WTC11 (cell line): ENCODE measurements at regions of chr5 and their contacts with region 1.

Region 1: DNA sequence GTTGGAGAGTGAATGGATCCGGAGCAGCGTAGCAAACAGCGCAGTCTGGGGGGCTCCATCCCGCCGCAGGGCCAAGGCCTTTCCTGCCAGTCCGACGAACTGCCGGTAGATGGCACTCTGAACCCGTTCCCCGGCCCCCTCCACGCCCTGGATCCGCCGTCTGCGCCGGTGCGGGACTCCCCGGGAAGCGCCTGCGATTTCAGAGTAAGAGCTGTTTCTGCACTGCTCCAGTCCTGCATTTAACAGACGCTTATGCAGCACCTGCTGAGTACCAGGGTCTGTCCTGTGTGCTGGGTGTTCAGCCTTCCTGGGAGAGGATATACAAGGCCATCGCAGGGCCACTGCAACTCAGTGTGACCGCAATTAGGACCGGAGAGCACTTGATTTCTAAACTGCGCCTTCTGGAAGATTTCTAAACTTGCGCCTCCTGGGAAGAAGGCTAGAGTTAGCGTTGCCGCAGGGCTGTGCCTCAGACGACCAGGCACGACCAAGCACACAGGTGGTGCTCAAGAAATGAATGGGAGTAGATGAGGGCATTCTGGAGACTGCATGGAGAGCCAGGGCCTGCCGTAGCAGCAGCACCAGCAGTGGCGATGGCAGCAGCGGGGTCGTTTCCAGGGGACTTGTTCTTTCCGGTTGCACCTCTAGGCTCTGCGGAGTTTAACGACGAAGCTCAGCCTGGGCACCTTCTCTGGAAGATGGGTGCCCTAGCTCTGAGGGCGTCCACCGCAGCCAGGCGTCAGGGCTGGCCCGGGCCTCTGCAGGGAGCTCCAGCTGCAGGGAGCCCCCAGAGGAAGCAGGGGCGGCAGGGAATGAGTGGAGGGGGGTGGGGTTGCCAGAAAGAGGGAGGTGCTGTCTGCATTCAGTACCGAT is 14.3 kb upstream of the TIFAB start:
- DNase-seq: peak; percentile 91
- ATAC-seq: peak; percentile 83
- H3K4me3 Mint-ChIP-seq: peak overlapping the region; percentile 77
- H3K27ac Mint-ChIP-seq: no peak overlapping the region
- H3K4me1 Mint-ChIP-seq: peaks cover 23% of the 10 kb centered on the region
- H3K27me3 Mint-ChIP-seq: peaks cover 91% of the 10 kb centered on the region
- CTCF ChIP-seq: peak; percentile 66

Region 2: GRCh38 chr5:135448791-135449507 is 17.5 kb before region 1 on chr5:
- CTCF ChIA-PET with region 1: interaction called, 19 read pairs
- POLR2A ChIA-PET with region 1: no interaction called
- DNase-seq: no peak
- ATAC-seq: no peak
- H3K4me3 Mint-ChIP-seq: no peak overlapping the region
- H3K27ac Mint-ChIP-seq: no peak overlapping the region
- H3K4me1 Mint-ChIP-seq: peaks cover 9% of the 10 kb centered on the region
- H3K27me3 Mint-ChIP-seq: peaks cover 11% of the 10 kb centered on the region; the same call in 1 of the 2 replicates
- CTCF ChIP-seq: no peak

Region 3: GRCh38 chr5:135488727-135489465 is 22.5 kb after region 1 on chr5:
- CTCF ChIA-PET with region 1: interaction called, 50 read pairs
- POLR2A ChIA-PET with region 1: no interaction called
- DNase-seq: peak; percentile 86
- ATAC-seq: peak; percentile 56
- H3K4me3 Mint-ChIP-seq: peak overlapping the region; percentile 81
- H3K27ac Mint-ChIP-seq: no peak overlapping the region
- H3K4me1 Mint-ChIP-seq: peaks cover 55% of the 10 kb centered on the region
- H3K27me3 Mint-ChIP-seq: no peaks in the 10 kb centered on the region; the same call in 1 of the 2 replicates
- CTCF ChIP-seq: no peak

Region 4: GRCh38 chr5:135521964-135522363 is 55.5 kb after region 1 on chr5:
- CTCF ChIA-PET with region 1: no interaction called
- POLR2A ChIA-PET with region 1: no interaction called
- DNase-seq: no peak
- ATAC-seq: no peak
- H3K4me3 Mint-ChIP-seq: no peak overlapping the region
- H3K27ac Mint-ChIP-seq: no peak overlapping the region
- H3K4me1 Mint-ChIP-seq: peaks cover 5% of the 10 kb centered on the region; the same call in 1 of the 2 replicates
- H3K27me3 Mint-ChIP-seq: peaks cover 79% of the 10 kb centered on the region
- CTCF ChIP-seq: no peak

Region 5: GRCh38 chr5:135543485-135544304 is 77.3 kb after region 1 on chr5:
- CTCF ChIA-PET with region 1: interaction called, 524 read pairs
- POLR2A ChIA-PET with region 1: no interaction called
- DNase-seq: peak; percentile 54
- ATAC-seq: peak; percentile 44
- H3K4me3 Mint-ChIP-seq: peak overlapping the region; percentile 71
- H3K27ac Mint-ChIP-seq: no peak overlapping the region
- H3K4me1 Mint-ChIP-seq: peaks cover 35% of the 10 kb centered on the region
- H3K27me3 Mint-ChIP-seq: peaks cover 99% of the 10 kb centered on the region
- CTCF ChIP-seq: no peak

Region 6: GRCh38 chr5:135729321-135729786 is 262.9 kb after region 1 on chr5:
- CTCF ChIA-PET with region 1: interaction called, 12 read pairs
- POLR2A ChIA-PET with region 1: no interaction called
- DNase-seq: no peak
- ATAC-seq: 0 out of 2 replicates have a peak, but pooled peaks have one; percentile 41
- H3K4me3 Mint-ChIP-seq: no peak overlapping the region
- H3K27ac Mint-ChIP-seq: no peak overlapping the region
- H3K4me1 Mint-ChIP-seq: peaks cover 11% of the 10 kb centered on the region
- H3K27me3 Mint-ChIP-seq: no peaks in the 10 kb centered on the region
- CTCF ChIP-seq: no peak